GM18951 (cell line): ENCODE measurements at regions of chr12 and their contacts with region 1.

Region 1: GRCh38 chr12:94532490-94533422 is 73.1 kb upstream of the CEP83 start:
- POLR2A ChIP-seq: no peak

Region 2: DNA sequence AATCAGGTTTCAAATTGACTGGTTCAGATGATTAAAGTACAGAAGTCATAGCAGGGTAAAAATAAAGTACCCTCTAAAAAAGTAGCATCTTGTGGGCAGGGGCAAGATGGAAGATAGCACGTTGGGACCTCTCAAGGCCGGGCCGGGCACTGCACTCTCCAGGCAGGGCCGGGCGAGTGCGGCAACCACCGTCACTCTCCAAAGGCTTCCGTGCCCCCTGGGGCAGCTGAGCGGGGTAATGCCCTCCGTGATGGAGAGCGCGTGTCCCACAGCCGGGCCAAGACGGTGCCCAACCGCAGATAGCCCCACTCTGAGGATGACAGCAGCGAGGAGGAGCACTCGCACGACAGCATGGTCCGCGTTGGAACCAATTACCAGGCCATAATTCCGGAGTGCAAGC is 392.9 kb before region 1 on chr12:
- in situ Hi-C with region 1: loop called (anchors 5 kb)
- POLR2A ChIP-seq: no peak

Region 3: GRCh38 chr12:95548539-95549391 is 1016.0 kb after region 1 on chr12:
- in situ Hi-C with region 1: loop called (anchors 25 kb)
- POLR2A ChIP-seq: no peak